Common myeloid progenitor, CD34-positive (primary cell): ENCODE measurements at regions of chr11 and their contacts with region 1.

Region 1: DNA sequence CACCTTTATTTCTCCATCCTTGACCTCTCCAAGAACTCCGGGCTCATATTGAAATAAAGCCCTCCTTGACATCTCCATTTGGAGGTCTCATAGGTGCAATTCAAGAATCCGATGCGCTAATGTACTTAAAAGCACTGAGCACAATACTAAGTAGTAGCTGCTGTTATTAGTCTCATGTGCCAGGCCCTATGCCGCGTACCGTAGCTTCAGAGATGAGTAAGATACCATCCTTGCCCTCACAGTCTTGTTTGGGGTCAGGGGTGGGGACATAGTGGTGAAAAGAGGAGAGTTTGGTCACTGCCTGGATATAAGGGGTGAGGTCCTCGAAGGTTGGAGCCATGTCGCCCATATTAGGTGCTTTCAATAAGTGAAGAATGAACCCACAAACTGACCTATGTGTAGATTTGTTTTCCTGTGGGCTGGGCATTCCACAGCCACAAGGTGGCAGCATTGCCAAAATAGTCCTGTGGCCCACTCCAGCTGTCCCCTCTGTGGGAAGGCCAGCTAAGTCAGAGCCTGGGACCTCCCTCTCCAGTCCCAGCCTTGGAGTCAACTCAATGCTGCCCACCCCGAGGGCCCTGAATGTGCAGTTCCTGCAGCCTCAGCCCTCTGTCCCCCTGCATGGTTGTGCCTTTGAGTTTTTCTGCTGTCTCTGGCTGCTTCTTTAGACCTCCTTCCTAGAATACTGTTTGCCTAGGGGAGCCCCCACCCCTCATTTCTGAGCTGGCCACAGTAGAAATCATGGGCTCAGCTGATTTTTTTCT is 6.5 kb downstream of the DCPS start:
- DNase-seq: peak; percentile 72 to 77 (median 75)
- H3K4me3 ChIP-seq: no peak overlapping the region
- H3K27ac ChIP-seq: no peak overlapping the region
- H3K4me1 ChIP-seq: peaks cover 3 to 50% (median 25%) of the 10 kb centered on the region in 4 experiments
- H3K27me3 ChIP-seq: no peaks in the 10 kb centered on the region

Region 2: DNA sequence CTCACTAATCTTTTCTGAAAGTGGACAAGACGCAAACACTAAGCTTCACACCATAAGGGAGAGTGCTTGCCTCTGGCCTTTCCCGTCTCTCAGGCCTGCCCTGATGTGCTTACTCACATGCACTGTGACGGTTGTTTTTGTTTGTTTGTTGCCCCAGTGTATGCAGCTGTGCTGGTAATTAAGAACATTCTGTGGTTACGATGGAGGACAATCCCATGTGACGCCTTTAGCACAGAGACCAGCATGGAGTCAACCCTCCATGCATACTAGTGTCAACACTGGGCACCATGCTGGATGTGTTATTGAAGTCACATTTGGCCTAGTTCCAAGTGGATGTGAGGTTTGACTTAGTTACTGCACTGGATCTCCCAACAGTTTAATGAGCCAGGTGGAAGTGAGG is 220.0 kb before region 1 on chr11:
- CTCF ChIA-PET with region 1: no interaction called
- POLR2A ChIA-PET with region 1: no interaction called
- DNase-seq: no peak
- H3K4me3 ChIP-seq: no peak overlapping the region
- H3K27ac ChIP-seq: no peak overlapping the region
- H3K4me1 ChIP-seq: no peaks in the 10 kb centered on the region
- H3K27me3 ChIP-seq: no peaks in the 10 kb centered on the region

Region 3: GRCh38 chr11:126355324-126355925 is 45.0 kb after region 1 on chr11 and contains the start of gene ST3GAL4:
- CTCF ChIA-PET with region 1: interaction called, 81 read pairs
- POLR2A ChIA-PET with region 1: no interaction called
- DNase-seq: peak; percentile 54 to 70 (median 65)
- H3K4me3 ChIP-seq: peak within 1 kb of the TSS; percentile 62 to 94 (median 77)
- H3K27ac ChIP-seq: peak within 1 kb of the TSS; percentile 58 to 83
- H3K4me1 ChIP-seq: peaks cover 6 to 88% (median 73%) of the 10 kb centered on the region in 4 experiments
- H3K27me3 ChIP-seq: no peaks in the 10 kb centered on the region

Region 4: GRCh38 chr11:126419801-126420697 is 109.6 kb after region 1 on chr11:
- CTCF ChIA-PET with region 1: interaction called, 20 read pairs
- POLR2A ChIA-PET with region 1: interaction called, 4 read pairs
- DNase-seq: peak; percentile 90 to 97 (median 92)
- H3K4me3 ChIP-seq: peak overlapping the region in 4 of 7 experiments; percentile 13 to 44 (median 20)
- H3K27ac ChIP-seq: no peak overlapping the region
- H3K4me1 ChIP-seq: peaks cover 10 to 66% (median 53%) of the 10 kb centered on the region in 4 experiments
- H3K27me3 ChIP-seq: no peaks in the 10 kb centered on the region

Region 5: GRCh38 chr11:126440792-126441514 is 130.5 kb after region 1 on chr11:
- CTCF ChIA-PET with region 1: interaction called, 51 read pairs
- POLR2A ChIA-PET with region 1: no interaction called
- DNase-seq: peak; percentile 68 to 80 (median 74)
- H3K4me3 ChIP-seq: peak overlapping the region in 2 of 7 experiments; percentile 32 to 50
- H3K27ac ChIP-seq: no peak overlapping the region
- H3K4me1 ChIP-seq: peaks cover 0 to 49% (median 15%) of the 10 kb centered on the region in 4 experiments
- H3K27me3 ChIP-seq: no peaks in the 10 kb centered on the region

Region 6: DNA sequence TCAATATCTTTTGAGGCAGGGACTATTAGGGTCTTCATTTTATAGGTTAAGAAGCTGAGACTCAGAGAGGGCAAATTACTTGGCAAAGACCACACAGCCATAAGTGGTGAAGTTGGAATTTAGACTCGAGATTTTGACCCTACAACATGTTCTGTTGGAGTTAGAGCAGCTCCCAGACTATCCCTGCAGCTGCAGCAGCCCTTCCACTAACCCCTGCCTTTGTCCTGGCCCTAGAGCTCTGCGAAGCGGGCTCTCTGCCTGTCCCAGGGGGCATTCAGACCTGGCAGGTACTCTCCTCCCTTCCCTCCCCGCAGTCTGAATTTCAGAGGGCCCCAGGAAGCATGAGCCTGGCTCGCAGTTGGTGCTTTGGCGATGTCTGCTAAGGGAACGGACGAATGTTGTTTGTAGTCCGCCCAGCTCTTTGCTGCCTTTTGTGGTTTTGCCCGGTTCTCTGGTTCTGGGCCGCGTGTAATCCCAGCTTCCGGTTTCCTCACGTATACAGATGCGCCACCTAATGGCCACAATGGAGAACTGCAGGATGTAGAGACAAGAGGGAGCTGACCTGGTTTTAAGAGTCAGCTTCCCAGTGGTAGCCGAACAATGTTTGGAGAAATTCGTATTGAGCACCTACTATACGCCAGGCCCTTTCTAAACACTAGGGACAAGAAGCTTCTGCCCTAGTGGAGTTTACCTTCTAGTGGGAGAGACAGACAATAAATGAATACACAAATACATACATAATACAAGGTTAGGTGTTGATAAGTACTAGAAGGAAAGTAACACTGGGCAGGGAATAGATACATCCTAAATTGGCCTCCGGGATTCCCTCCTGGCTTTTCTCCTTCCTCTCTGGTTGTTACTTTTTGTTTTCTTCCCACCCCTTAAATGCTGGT is 170.2 kb after region 1 on chr11:
- CTCF ChIA-PET with region 1: interaction called, 105 read pairs
- POLR2A ChIA-PET with region 1: interaction called, 4 read pairs
- DNase-seq: peak; percentile 84 to 91 (median 89)
- H3K4me3 ChIP-seq: peak overlapping the region in 5 of 7 experiments; percentile 2 to 41 (median 29)
- H3K27ac ChIP-seq: no peak overlapping the region
- H3K4me1 ChIP-seq: peaks cover 0 to 59% (median 31%) of the 10 kb centered on the region in 4 experiments
- H3K27me3 ChIP-seq: no peaks in the 10 kb centered on the region